HEK293T (cell line): ENCODE measurements at regions of chr1 and their contacts with region 1.

Region 1: GRCh38 chr1:35451125-35451528 is 106.1 kb downstream of the KIAA0319L start:
- DNase-seq: peak; percentile 81

Region 2: DNA sequence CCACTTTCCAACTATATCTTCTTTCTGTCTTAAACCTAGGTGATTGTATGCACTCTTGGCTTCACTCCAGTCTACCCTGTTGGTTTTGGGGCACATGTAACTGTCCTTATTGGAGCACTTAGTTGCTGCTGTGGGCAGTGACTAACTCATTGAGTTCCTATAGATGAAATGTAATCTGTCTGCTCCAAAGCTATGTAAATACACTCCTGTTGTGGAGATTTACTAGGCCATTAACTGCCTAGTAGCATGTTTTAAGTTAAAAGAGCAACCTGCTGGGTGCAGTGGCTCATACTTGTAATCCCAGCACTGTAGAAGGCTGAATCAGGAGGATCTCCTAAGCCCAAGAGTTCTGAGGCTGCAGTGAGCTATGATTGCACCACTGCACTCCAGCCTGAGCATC is 45.0 kb before region 1 on chr1:
- CTCF ChIA-PET with region 1: no interaction called
- POLR2A ChIA-PET with region 1: no interaction called
- DNase-seq: no peak

Region 3: DNA sequence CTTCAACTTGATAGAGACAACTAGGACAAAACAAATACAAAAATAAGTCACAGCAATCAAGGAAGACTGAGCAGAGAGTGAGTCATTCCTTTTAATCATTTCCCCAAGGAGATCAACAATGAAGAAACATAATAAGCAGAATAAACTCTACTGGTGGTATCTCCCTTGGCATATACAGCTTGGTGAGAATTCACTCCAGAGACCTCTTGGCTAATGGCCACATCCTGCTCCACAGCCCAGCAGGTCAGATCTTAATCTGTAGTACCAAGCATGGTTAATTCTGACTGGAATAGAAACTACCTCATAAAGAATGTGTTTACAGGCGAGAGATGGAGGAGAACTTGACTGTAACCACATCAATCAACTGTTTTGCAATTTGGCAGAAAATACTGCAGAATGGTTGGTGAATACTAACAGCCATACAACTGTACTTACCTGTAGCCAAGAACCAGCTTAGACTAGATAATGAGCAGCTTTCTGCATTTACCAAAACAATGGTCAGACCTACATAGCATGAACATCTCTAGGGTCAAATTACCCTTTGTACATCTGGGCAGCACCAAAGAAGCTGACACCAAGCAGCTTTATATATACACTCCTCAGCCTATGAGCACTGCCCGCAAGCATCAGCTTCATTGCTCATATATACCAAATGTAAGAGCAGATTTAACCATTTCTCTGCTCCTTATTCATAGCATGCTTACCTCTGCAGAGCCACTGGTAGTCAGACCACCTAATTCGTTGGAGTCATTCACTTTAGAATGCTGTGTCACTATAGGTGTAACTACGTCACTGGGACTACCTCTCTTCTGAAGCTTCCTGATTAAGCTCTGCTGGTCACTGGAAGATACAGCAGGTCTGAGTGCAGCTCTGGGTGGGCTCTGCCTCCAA is 55.0 kb after region 1 on chr1:
- CTCF ChIA-PET with region 1: no interaction called
- POLR2A ChIA-PET with region 1: no interaction called
- DNase-seq: no peak

Region 4: DNA sequence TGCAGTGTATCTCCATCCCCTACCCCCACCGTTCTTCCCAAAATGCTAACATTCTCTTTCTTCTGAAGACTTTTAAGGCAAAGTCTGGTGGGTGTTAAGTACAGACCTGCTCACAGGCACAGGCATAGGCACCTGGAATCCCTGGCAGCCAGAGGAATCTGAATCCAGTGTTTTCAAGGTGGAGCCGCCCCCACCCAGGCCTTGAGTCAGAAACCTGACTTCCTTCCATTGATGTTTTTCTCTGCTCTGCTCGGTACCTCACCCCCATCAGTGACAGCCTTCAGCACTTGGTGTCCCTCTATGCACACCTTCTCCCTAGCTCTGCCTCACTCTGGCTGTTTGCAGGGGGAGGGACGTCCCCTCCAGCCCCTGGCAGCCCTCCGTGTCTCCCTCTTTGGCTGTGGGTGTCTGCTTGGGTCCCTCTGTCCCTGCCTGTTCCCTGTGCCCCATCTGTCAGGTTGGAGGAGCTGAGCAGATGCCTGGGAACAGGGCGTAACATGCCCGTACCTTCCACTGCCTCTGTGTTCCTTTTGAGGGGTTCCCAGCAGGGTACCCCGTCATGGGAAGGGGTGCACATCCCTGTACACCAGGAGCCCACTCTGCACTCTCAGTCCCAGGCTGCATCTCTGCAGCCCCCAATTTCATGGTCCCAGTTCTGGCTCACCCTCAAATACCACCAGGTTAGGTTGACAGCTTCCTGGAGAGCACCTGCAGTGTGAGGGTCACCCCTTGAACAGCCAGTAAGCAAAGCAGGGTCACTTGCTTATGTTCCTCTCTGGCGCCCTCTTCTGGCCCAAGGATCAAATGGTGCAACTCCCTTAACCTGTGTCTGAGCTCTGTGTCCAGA is 113.1 kb after region 1 on chr1:
- CTCF ChIA-PET with region 1: interaction called, 27 read pairs
- POLR2A ChIA-PET with region 1: no interaction called
- DNase-seq: peak; percentile 73